A549 (cell line): ENCODE measurements at regions of chr10 and their contacts with region 1.

Region 1: DNA sequence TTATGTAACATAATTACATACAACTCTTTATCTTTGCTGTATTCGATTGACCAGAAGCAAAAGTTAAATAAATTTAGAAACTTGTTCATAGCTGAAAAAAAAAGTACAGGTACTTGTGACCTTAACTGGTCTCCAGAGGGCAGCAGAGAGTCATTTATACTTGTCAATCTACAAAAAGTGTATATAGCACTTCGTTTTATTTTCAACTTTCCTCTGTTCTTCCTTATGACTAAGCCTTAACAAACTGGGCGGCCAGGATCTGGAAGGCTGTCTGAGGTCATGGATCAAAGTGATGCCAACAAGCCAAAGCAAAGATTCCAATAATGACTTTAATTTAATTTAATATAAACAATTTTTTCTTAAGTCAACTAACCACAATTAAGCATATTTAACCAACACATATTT is 29.8 kb downstream of the C10orf67 start:
- DNase-seq: peak; percentile 13 to 74
- ATAC-seq: peak; percentile 79 to 80; a peak in 5 of 6 replicates
- H3K4me3 ChIP-seq: no peak overlapping the region
- H3K27ac ChIP-seq: no peak overlapping the region
- H3K4me1 ChIP-seq: no peaks in the 10 kb centered on the region
- CTCF ChIP-seq: peak; percentile 85
- EP300 ChIP-seq: no peak
- POLR2A ChIP-seq: no peak
- RAD21 ChIP-seq: peak; percentile 79 to 89

Region 2: GRCh38 chr10:22945934-22946673 is 368.7 kb before region 1 on chr10:
- CTCF ChIA-PET with region 1: no interaction called
- POLR2A ChIA-PET with region 1: no interaction called
- DNase-seq: no peak
- ATAC-seq: no peak
- H3K4me3 ChIP-seq: no peak overlapping the region
- H3K27ac ChIP-seq: no peak overlapping the region
- H3K4me1 ChIP-seq: no peaks in the 10 kb centered on the region
- CTCF ChIP-seq: no peak
- EP300 ChIP-seq: no peak
- POLR2A ChIP-seq: no peak
- RAD21 ChIP-seq: no peak

Region 3: GRCh38 chr10:23230582-23230981 is 84.3 kb before region 1 on chr10:
- CTCF ChIA-PET with region 1: no interaction called
- POLR2A ChIA-PET with region 1: no interaction called
- DNase-seq: no peak
- ATAC-seq: no peak
- H3K4me3 ChIP-seq: no peak overlapping the region
- H3K27ac ChIP-seq: no peak overlapping the region
- H3K4me1 ChIP-seq: no peaks in the 10 kb centered on the region
- CTCF ChIP-seq: no peak
- EP300 ChIP-seq: no peak
- POLR2A ChIP-seq: no peak
- RAD21 ChIP-seq: no peak

Region 4: DNA sequence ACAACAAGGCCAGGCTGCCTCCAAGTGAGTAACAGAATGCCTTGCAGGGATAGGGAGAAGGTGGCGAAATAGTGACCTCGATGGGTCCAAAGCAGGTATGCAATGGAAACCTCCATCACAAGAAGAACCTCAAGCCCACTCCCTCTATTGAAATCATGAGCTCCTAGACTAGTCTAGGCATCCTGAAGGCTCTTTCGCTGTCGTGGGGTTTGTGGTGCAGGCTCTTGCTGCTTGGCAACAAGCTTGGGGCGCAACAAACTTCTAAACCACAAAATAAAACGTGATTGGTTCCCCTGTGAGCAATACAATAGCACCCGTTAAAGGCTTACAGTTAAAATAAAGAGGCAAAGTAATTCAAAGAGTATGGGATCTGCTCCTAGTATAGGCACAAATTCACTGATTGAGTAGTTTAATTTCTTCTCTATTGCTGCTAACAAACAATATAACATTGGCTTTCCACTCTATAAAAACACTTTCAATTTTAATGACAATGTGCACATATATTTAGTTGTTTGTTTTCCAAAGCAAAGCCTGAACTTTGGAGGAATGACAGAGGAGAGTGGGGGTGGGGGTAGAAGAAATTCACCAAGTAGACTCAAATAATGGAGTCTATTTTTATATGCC is 34.3 kb before region 1 on chr10:
- CTCF ChIA-PET with region 1: no interaction called
- POLR2A ChIA-PET with region 1: no interaction called
- DNase-seq: no peak
- ATAC-seq: no peak
- H3K4me3 ChIP-seq: no peak overlapping the region
- H3K27ac ChIP-seq: no peak overlapping the region
- H3K4me1 ChIP-seq: no peaks in the 10 kb centered on the region
- CTCF ChIP-seq: no peak
- EP300 ChIP-seq: no peak
- POLR2A ChIP-seq: no peak
- RAD21 ChIP-seq: no peak

Region 5: GRCh38 chr10:23293145-23293724 is 21.6 kb before region 1 on chr10:
- CTCF ChIA-PET with region 1: interaction called, 13 read pairs
- POLR2A ChIA-PET with region 1: no interaction called
- DNase-seq: peak; percentile 10 to 44
- ATAC-seq: peak; percentile 77 to 86; a peak in 4 of 6 replicates
- H3K4me3 ChIP-seq: no peak overlapping the region
- H3K27ac ChIP-seq: no peak overlapping the region
- H3K4me1 ChIP-seq: no peaks in the 10 kb centered on the region
- CTCF ChIP-seq: peak; percentile 54
- EP300 ChIP-seq: no peak
- POLR2A ChIP-seq: no peak
- RAD21 ChIP-seq: peak; percentile 47 to 63; a peak in 4 of 5 replicates